Mammary epithelial cell (primary cell): ENCODE measurements at regions of chr3 and their contacts with region 1.

Region 1: GRCh38 chr3:169149349-169149890 is 514.1 kb downstream of the MECOM start:
- DNase-seq: peak; percentile 81
- H3K4me3 ChIP-seq: peak overlapping the region; percentile 45 to 55 (median 54)
- H3K27ac ChIP-seq: peak overlapping the region; percentile 30
- H3K4me1 ChIP-seq: peaks cover 15% of the 10 kb centered on the region
- H3K27me3 ChIP-seq: no peaks in the 10 kb centered on the region
- CTCF ChIP-seq: peak; percentile 70 to 85

Region 2: GRCh38 chr3:168884353-168884903 is 265.0 kb before region 1 on chr3:
- CTCF ChIA-PET with region 1: no interaction called
- dilution Hi-C with region 1: no loop called
- in situ Hi-C with region 1: loop called in 1 of 2 experiments (anchors 25 kb)
- intact Hi-C with region 1: no loop called
- DNase-seq: peak; percentile 91
- H3K4me3 ChIP-seq: no peak overlapping the region
- H3K27ac ChIP-seq: peak overlapping the region; percentile 48
- H3K4me1 ChIP-seq: peaks cover 11% of the 10 kb centered on the region
- H3K27me3 ChIP-seq: no peaks in the 10 kb centered on the region
- CTCF ChIP-seq: no peak

Region 3: GRCh38 chr3:169295126-169295525 is 145.7 kb after region 1 on chr3:
- CTCF ChIA-PET with region 1: no interaction called
- dilution Hi-C with region 1: no loop called
- in situ Hi-C with region 1: no loop called
- intact Hi-C with region 1: loop called (anchors 2 kb)
- DNase-seq: no peak
- H3K4me3 ChIP-seq: no peak overlapping the region
- H3K27ac ChIP-seq: no peak overlapping the region
- H3K4me1 ChIP-seq: no peaks in the 10 kb centered on the region
- H3K27me3 ChIP-seq: no peaks in the 10 kb centered on the region
- CTCF ChIP-seq: peak; percentile 21 to 43

Region 4: GRCh38 chr3:169509359-169509758 is 359.9 kb after region 1 on chr3:
- CTCF ChIA-PET with region 1: no interaction called
- dilution Hi-C with region 1: no loop called
- in situ Hi-C with region 1: no loop called
- intact Hi-C with region 1: loop called (anchors 2 kb)
- DNase-seq: no peak
- H3K4me3 ChIP-seq: no peak overlapping the region
- H3K27ac ChIP-seq: no peak overlapping the region
- H3K4me1 ChIP-seq: no peaks in the 10 kb centered on the region
- H3K27me3 ChIP-seq: no peaks in the 10 kb centered on the region
- CTCF ChIP-seq: no peak

Region 5: DNA sequence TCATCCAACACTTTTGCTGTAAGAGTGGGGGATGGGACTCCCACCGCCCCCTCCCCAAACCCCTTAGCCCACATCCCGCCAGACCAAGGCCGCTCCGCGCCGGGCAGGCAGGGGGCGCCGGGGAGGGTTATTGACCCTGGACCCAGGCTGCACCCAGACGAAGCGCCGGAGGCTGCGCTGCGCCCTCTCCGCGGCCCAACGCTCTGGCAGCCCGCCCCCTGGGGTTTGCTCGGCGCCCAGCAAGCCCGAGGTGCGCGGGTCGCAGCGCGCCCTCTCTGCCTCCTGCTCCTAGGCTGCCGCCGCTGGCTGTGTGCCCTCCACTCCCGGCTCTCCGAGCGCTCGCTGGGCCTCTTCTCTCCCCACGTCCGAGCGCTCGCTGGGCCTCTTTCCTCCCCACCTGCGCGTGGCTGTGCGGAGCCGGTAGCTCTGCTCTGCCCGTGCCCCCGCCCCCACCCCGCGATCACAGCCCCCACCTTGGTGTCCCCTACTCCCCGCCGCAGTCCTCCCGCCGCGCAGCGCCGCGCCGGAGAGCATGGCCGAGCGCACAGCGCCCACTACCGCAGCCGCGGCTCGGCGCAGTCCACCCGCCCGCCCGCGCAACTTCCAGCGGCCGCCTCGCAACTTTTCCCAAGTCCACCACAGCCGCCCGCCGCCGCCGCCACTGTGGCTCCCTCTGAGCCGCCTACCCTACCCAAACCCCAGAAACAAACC is 512.9 kb after region 1 on chr3:
- CTCF ChIA-PET with region 1: interaction called, 5 read pairs
- dilution Hi-C with region 1: no loop called
- in situ Hi-C with region 1: loop called in 1 of 2 experiments (anchors 10 kb)
- intact Hi-C with region 1: loop called (anchors 1 kb)
- DNase-seq: peak; percentile 73
- H3K4me3 ChIP-seq: peak overlapping the region; percentile 42 to 61 (median 51)
- H3K27ac ChIP-seq: no peak overlapping the region
- H3K4me1 ChIP-seq: peaks cover 14% of the 10 kb centered on the region
- H3K27me3 ChIP-seq: peaks cover 68% of the 10 kb centered on the region
- CTCF ChIP-seq: peak; percentile 10 to 51

Region 6: GRCh38 chr3:169772897-169773828 is 623.7 kb after region 1 on chr3 and contains the start of gene MYNN:
- CTCF ChIA-PET with region 1: no interaction called
- dilution Hi-C with region 1: no loop called
- in situ Hi-C with region 1: no loop called
- intact Hi-C with region 1: loop called (anchors 5 kb)
- DNase-seq: peak; percentile 89
- H3K4me3 ChIP-seq: peak within 1 kb of the TSS; percentile 86 to 95 (median 94)
- H3K27ac ChIP-seq: peak within 1 kb of the TSS; percentile 93
- H3K4me1 ChIP-seq: peaks cover 17% of the 10 kb centered on the region
- H3K27me3 ChIP-seq: no peaks in the 10 kb centered on the region
- CTCF ChIP-seq: peak in 1 of 2 donors; percentile 28
- total RNA-seq, gene MYNN: 13.0 to 18.3 TPM